Posterior vena cava (tissue), 2 donors: ENCODE measurements at regions of chr10 and their contacts with region 1.

Region 1: DNA sequence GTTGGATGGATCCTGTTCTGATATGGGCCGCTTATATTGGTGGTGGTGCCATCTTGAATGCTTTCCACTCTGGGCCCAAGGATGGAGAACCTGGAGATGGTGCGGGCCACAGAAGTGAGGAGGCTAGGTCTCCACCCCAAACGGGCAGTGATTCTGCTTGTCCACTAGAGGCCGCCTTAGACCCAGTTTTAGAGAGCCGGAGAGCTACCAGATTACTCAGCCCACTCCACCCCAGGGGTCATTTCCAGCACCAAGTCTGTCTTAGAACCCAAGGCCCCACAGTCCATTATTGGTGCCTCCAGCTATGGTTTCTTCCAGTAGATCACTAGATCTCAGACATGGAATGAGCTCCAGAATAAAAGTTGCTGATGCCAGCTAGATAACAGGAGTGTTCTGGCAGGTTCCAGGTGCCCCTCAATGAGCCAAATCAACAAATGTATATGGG is 11.8 kb upstream of the CAMK2G start:
- DNase-seq: peak; percentile 87

Region 2: DNA sequence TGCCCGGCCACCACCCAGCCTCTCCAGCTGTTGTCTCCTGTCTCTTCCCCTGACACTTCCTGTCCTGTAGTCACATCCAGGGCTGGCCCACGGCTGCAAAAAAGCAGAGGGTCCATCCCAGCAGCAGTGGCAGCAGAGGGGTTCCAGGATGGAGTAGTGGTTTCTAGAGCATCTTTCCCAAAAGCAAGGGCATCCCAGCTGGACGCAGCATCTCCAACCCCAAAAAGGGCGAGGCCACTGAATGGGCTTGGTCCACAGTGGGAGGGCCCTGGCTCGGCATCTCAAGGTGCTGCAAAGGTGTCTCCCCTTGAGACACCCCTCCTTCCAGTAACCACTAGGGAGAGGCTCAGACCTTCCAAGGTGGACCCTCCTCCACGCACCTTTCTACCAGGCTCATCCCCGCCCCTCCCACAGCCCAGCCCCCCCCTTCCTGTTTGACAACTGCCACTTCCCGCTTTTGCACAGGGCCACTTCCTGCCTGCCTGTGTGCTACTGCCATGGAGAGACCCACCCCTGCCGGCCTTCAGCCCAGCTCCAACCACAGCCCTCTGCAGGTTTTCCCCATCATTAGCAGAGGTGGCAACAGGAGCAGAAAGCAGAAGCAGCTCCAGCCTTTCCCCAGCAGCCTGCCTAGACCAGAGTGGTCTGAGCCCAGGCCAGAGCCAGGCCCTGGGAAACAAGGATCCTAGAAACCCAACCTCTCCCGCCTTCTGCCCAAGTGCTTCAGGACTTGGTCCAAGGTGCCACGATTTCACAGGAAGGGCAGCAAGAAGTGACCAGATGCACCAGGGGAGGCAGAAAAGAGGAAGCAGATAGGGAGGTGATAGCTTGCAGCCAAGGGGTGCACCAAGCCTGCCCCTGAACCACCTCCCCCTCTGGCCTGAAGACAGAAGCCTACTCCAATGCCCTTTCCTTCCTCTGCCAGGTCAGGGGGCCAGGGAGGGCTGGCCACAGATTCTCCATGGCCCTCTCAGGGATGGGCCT is 20.4 kb before region 1 on chr10:
- intact Hi-C with region 1: no loop called
- DNase-seq: no peak

Region 3: GRCh38 chr10:73940634-73941221 is 54.6 kb after region 1 on chr10:
- intact Hi-C with region 1: loop called (anchors 5 kb)
- DNase-seq: peak; percentile 97